Activated CD4-positive, alpha-beta T cell treated with anti-CD3 and anti-CD28 coated beads for 36 hours (primary cell): ENCODE measurements at regions of chr12 and their contacts with region 1.

Region 1: GRCh38 chr12:102702447-102703114 is 214.5 kb downstream of the PAH start:
- DNase-seq: peak; percentile 55
- ATAC-seq: no peak
- H3K4me3 Mint-ChIP-seq: no peak overlapping the region
- H3K27ac Mint-ChIP-seq: no peak overlapping the region
- H3K4me1 Mint-ChIP-seq: no peaks in the 10 kb centered on the region
- H3K27me3 Mint-ChIP-seq: peaks cover 2% of the 10 kb centered on the region

Region 2: DNA sequence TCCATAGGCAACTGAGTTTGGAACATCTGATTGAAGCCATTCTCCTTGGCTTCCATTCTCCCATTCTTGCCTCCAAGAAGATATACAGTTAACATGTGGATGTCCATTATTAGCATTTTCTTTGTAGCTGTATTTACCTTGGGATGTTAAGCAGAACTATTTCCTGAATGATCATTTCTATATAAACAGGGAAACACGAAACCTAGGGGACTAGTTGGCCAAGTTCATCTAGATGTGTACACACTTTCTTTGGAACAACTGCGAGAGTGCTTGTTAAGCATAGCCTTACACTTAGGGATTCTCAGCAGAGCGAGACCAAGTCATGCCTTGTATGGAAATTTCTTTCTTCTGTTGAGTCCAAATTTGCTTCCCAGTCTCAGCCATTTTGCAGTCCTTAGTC is 783.1 kb before region 1 on chr12:
- CTCF ChIA-PET with region 1: no interaction called
- POLR2A ChIA-PET with region 1: no interaction called
- intact Hi-C with region 1: loop called in 1 of 2 experiments (anchors 5 kb)
- DNase-seq: no peak
- ATAC-seq: no peak
- H3K4me3 Mint-ChIP-seq: no peak overlapping the region
- H3K27ac Mint-ChIP-seq: no peak overlapping the region
- H3K4me1 Mint-ChIP-seq: peaks cover 2% of the 10 kb centered on the region
- H3K27me3 Mint-ChIP-seq: peaks cover 6% of the 10 kb centered on the region

Region 3: GRCh38 chr12:102169922-102170621 is 532.5 kb before region 1 on chr12:
- CTCF ChIA-PET with region 1: no interaction called
- POLR2A ChIA-PET with region 1: no interaction called
- intact Hi-C with region 1: loop called in 1 of 2 experiments (anchors 2 kb)
- DNase-seq: peak; percentile 15
- ATAC-seq: peak; percentile 60
- H3K4me3 Mint-ChIP-seq: no peak overlapping the region
- H3K27ac Mint-ChIP-seq: no peak overlapping the region
- H3K4me1 Mint-ChIP-seq: peaks cover 14% of the 10 kb centered on the region
- H3K27me3 Mint-ChIP-seq: no peaks in the 10 kb centered on the region

Region 4: DNA sequence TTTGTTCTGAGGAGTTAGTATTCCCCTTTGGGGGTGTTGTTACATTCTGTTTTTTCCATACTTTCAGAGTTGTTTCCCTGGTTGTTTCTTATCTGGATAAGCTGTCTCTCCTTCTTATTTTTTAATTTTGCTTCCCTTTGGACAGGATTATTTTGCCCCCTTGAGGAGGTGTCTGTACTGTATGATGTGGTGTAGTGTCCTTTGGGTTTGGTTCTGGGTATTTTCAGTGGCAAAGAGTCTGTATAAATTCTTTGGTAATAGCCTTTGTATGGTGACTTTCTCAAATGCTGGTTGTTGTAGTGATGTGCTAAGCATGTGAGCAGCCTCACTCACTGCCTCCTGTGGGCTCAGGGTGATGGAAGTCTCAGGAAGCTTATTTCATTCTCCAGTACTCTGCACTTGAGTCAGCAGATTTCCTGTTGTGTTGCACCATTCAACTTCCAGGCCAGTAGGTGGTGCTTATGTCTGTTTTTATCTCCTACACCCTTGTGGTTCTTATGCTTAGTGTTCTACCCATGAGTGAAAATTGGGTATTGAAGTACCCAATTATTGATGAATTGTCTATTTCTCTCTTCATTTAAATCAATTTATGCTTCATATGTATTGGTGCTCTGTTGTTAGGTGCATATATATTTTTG is 401.6 kb before region 1 on chr12:
- CTCF ChIA-PET with region 1: no interaction called
- POLR2A ChIA-PET with region 1: no interaction called
- intact Hi-C with region 1: loop called in 1 of 2 experiments (anchors 1 kb)
- DNase-seq: peak; percentile 19
- ATAC-seq: peak; percentile 88
- H3K4me3 Mint-ChIP-seq: no peak overlapping the region
- H3K27ac Mint-ChIP-seq: no peak overlapping the region
- H3K4me1 Mint-ChIP-seq: no peaks in the 10 kb centered on the region
- H3K27me3 Mint-ChIP-seq: peaks cover 2% of the 10 kb centered on the region